ENCODE measurements at regions of chr1 and their contacts with region 1.

Region 1: GRCh38 chr1:198638894-198639635 is at the start of gene PTPRC:
- DNase-seq: peak in 4 of 14 experiments; percentile 35 to 88 (median 76)
- ATAC-seq: peak; percentile 83
- H3K4me3 ChIP-seq: peak within 1 kb of the TSS; percentile 79
- H3K4me3 Mint-ChIP-seq: peak within 1 kb of the TSS; percentile 95
- H3K27ac ChIP-seq: peak within 1 kb of the TSS; percentile 67 to 77
- H3K27ac Mint-ChIP-seq: peak within 1 kb of the TSS; percentile 98
- H3K4me1 ChIP-seq: peaks cover 20% of the 10 kb centered on the region
- H3K4me1 Mint-ChIP-seq: peaks cover 62% of the 10 kb centered on the region
- H3K27me3 ChIP-seq: no peaks in the 10 kb centered on the region
- H3K27me3 Mint-ChIP-seq: no peaks in the 10 kb centered on the region
- CTCF ChIP-seq: no peak
- total RNA-seq, gene PTPRC: 661 to 698 TPM

Region 2: DNA sequence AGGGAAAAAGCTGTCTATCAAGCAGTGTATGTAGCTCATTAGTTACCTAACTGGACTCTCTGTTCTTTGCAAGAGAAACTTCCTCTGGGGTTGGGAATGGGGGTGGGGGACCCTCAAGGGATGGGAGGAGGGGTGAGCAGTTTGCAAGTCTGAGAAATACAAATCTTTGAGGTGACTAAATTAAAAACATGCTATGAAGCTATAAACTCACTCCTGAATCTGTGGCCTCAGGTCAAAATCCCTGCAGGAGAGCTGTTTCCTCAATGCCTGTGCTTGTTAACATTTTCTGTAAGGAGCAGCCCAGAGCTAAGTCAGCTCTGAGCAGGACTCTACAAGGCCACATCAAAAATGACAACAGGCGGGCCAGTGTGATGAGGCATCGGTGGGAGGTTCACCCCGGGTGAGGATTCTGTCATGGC is 33.0 kb before region 1 on chr1:
- CTCF ChIA-PET with region 1: interaction called, 4 read pairs
- POLR2A ChIA-PET with region 1: interaction called, 34 read pairs
- intact Hi-C with region 1: loop called in 1 of 2 experiments (anchors 5 kb)
- DNase-seq: no peak
- ATAC-seq: no peak
- H3K4me3 ChIP-seq: no peak overlapping the region
- H3K4me3 Mint-ChIP-seq: no peak overlapping the region
- H3K27ac ChIP-seq: no peak overlapping the region
- H3K27ac Mint-ChIP-seq: peak overlapping the region; percentile 76
- H3K4me1 ChIP-seq: peaks cover 29% of the 10 kb centered on the region
- H3K4me1 Mint-ChIP-seq: peaks cover 71% of the 10 kb centered on the region
- H3K27me3 ChIP-seq: no peaks in the 10 kb centered on the region
- H3K27me3 Mint-ChIP-seq: no peaks in the 10 kb centered on the region
- CTCF ChIP-seq: no peak

Region 3: DNA sequence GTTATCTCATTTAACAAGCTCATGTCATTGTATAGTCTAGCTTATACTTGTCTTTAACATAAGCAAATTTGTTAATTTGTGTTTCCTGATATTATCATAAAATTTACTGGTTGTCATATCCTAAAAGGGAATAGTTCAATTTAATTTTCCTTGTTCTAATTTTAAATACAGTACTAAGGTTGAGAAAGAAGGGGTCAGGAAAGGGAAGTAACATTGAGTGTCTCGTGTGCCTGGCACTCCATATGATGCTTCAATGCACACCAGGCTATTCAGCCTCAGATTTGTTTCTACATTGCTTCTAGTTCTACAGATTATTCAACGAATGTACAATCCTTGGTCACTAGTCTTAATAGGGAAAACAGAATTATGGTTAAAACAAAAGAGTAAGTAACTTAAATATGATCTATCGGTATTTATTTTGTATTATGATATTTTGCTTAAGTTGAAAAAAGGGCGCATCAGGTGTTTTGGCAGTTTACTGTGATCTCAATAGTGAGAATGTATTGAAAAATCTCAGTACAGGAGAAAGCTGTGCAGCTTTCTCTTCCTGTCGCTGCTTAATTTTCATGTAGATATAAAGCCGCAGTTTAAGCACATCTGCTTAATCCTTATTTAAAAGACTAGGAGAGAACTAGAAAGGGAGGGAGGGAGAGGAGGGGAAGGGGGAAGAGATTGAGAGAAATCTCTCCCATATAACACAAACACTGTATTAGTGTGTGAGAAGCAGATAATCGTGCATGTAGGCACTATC is 12.8 kb after region 1 on chr1:
- CTCF ChIA-PET with region 1: interaction called, 4 read pairs
- POLR2A ChIA-PET with region 1: interaction called, 58 read pairs
- intact Hi-C with region 1: loop called (anchors 1 to 2 kb)
- DNase-seq: peak in 1 of 14 experiments; percentile 46
- ATAC-seq: no peak
- H3K4me3 ChIP-seq: peak overlapping the region; percentile 79
- H3K4me3 Mint-ChIP-seq: peak overlapping the region; percentile 83
- H3K27ac ChIP-seq: peak overlapping the region; percentile 81 to 85
- H3K27ac Mint-ChIP-seq: peak overlapping the region; percentile 90
- H3K4me1 ChIP-seq: peaks cover 24% of the 10 kb centered on the region
- H3K4me1 Mint-ChIP-seq: peaks cover 76% of the 10 kb centered on the region
- H3K27me3 ChIP-seq: no peaks in the 10 kb centered on the region
- H3K27me3 Mint-ChIP-seq: no peaks in the 10 kb centered on the region
- CTCF ChIP-seq: no peak

Region 4: GRCh38 chr1:198657550-198658064 is 18.5 kb after region 1 on chr1:
- CTCF ChIA-PET with region 1: no interaction called
- POLR2A ChIA-PET with region 1: interaction called, 58 read pairs
- intact Hi-C with region 1: loop called (anchors 1 to 2 kb)
- DNase-seq: peak in 5 of 14 experiments; percentile 21 to 85 (median 78)
- ATAC-seq: peak; percentile 25
- H3K4me3 ChIP-seq: peak overlapping the region; percentile 22
- H3K4me3 Mint-ChIP-seq: peak overlapping the region; percentile 66
- H3K27ac ChIP-seq: peak overlapping the region; percentile 81 to 85
- H3K27ac Mint-ChIP-seq: peak overlapping the region; percentile 90
- H3K4me1 ChIP-seq: peaks cover 25% of the 10 kb centered on the region
- H3K4me1 Mint-ChIP-seq: peaks cover 69% of the 10 kb centered on the region
- H3K27me3 ChIP-seq: no peaks in the 10 kb centered on the region
- H3K27me3 Mint-ChIP-seq: no peaks in the 10 kb centered on the region
- CTCF ChIP-seq: no peak

Region 5: DNA sequence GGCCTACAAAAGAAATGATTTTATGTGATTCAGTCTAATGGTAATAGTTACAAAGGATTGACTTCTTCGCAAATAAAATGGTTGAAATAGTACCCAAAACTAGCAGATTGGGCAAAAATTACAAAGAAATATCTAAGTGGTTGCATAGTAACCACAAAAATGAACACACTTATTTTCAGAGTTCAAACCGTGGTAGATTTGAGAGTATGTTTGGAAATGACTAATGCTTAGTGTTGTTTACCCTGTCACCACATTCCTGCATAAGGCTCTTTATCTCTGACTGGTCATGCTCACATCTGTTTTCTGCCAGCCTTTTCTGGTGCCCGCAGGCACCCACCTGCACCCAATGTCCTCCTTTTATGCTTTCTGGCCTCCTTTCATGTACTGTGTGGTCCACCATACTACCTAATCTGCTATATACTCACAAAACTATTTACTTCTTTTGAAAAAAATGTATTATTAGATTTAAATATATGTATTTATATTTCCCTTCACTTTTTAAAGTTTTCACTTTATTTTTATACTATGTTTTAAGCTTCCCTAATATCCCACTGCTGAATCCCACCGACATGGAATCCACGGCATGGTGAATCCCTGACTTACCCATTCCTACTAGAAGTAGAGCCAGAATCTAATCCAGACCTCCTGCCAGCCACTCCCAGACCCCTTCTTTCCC is 30.1 kb after region 1 on chr1:
- CTCF ChIA-PET with region 1: no interaction called
- POLR2A ChIA-PET with region 1: interaction called, 11 read pairs
- intact Hi-C with region 1: no loop called
- DNase-seq: peak in 6 of 14 experiments; percentile 29 to 83 (median 66)
- ATAC-seq: peak; percentile 72
- H3K4me3 ChIP-seq: no peak overlapping the region
- H3K4me3 Mint-ChIP-seq: peak overlapping the region; percentile 72
- H3K27ac ChIP-seq: peak overlapping the region; percentile 61 to 66
- H3K27ac Mint-ChIP-seq: peak overlapping the region; percentile 100
- H3K4me1 ChIP-seq: peaks cover 52% of the 10 kb centered on the region
- H3K4me1 Mint-ChIP-seq: peaks cover 98% of the 10 kb centered on the region
- H3K27me3 ChIP-seq: no peaks in the 10 kb centered on the region
- H3K27me3 Mint-ChIP-seq: no peaks in the 10 kb centered on the region
- CTCF ChIP-seq: no peak